Activated CD4-positive, alpha-beta memory T cell treated with anti-CD3 and anti-CD28 coated beads for 36 hours (primary cell): ENCODE measurements at regions of chr3 and their contacts with region 1.

Region 1: DNA sequence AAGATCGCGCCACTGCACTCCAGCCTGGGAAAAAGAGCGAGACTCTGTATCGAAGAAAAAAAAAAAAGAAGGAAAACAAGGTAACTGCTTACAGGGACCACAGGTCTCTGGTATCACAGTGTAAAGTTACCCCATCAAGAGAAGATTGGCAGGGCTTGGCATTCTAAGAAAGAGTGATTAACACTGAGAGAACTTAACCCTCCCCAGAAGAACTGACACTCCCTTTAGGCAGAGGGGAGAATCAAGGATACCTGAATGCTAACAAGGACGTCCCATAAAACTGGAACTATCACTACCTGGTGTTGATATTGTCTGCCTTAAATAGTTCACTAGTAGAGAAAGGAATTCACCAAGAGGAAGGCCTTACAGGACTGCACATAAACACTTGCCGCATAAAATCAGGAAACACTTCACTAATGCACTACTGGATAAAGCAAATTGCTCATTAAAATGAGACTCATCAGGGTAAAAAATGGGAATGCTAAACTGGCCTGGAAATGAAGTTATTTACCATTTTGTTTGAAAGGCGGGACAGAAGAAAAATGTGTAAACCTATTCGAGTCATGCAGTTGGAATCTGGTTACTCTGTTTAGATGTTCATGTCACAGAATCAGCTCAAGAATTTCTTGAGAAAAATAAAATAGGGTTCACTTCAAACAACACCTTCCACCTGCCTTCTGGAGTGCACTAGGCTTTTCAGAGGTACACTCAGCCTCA is 121.6 kb downstream of the FOXP1 start:
- DNase-seq: no peak
- H3K4me3 Mint-ChIP-seq: peak overlapping the region; percentile 47
- H3K27ac Mint-ChIP-seq: peak overlapping the region; percentile 94
- H3K4me1 Mint-ChIP-seq: peaks cover 67% of the 10 kb centered on the region
- H3K27me3 Mint-ChIP-seq: no peaks in the 10 kb centered on the region

Region 2: DNA sequence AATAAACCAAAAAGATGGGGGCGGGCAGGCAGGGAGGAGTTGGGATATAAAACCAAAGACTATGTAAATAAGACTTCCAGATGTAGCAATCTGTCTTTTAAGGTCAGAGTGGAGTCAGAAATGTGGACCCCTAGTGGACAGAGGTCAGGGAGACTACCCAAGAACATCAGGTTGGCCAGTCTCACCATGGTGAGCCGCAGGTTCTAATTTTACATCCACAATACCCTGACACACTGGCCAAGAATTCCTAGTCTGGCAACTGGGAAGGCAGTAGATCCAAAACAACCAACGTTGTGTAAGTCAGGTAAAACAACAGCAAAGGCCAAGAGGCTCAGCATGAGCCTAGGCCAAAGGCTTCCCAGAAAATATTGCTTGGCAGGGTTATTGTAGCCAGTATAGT is 81.8 kb before region 1 on chr3:
- CTCF ChIA-PET with region 1: no interaction called
- POLR2A ChIA-PET with region 1: no interaction called
- intact Hi-C with region 1: loop called (anchors 2 kb)
- DNase-seq: no peak
- H3K4me3 Mint-ChIP-seq: no peak overlapping the region
- H3K27ac Mint-ChIP-seq: peak overlapping the region; percentile 85
- H3K4me1 Mint-ChIP-seq: peaks cover 82% of the 10 kb centered on the region
- H3K27me3 Mint-ChIP-seq: no peaks in the 10 kb centered on the region

Region 3: GRCh38 chr3:71397046-71397445 is 64.9 kb before region 1 on chr3:
- CTCF ChIA-PET with region 1: interaction called, 7 read pairs
- POLR2A ChIA-PET with region 1: interaction called, 5 read pairs
- intact Hi-C with region 1: loop called (anchors 2 kb)
- DNase-seq: no peak
- H3K4me3 Mint-ChIP-seq: no peak overlapping the region
- H3K27ac Mint-ChIP-seq: no peak overlapping the region
- H3K4me1 Mint-ChIP-seq: peaks cover 72% of the 10 kb centered on the region
- H3K27me3 Mint-ChIP-seq: peaks cover 2% of the 10 kb centered on the region

Region 4: DNA sequence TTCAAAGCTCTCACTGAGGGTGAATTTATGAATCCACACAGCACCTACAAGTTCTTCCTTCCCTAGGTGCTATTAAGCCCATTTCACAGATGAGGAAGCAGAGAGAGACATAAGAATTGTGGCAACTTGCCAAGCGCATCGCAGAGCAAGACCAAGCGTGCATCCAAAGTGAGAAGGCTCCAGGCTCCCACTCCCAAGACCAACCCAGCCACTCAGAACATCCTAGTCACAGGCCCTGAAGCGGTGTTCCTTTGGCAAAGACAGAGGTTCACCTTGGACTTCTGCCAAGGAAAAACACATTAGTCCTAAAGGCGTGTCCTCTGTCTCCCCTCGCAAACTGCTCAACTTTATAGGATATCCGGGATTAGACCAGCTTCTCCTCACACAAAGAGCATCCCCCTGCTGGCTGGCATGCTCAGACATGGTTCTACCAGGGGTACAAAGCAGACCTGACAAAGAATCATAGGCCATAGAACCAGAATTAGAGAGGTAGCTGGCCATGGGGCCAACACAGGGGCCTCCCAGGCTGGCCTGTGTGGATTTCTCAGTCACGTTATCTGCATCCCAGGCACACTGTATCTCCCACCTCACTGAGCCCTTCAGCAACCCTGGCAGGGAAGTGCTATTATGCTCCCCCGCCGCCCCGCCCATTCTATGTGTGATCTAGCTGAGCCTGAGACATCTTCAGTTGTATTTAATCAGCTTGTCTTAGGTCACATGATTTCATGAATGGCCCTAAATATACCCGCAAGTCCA is 38.6 kb before region 1 on chr3:
- CTCF ChIA-PET with region 1: no interaction called
- POLR2A ChIA-PET with region 1: interaction called, 5 read pairs
- intact Hi-C with region 1: loop called (anchors 2 kb)
- DNase-seq: no peak
- H3K4me3 Mint-ChIP-seq: no peak overlapping the region
- H3K27ac Mint-ChIP-seq: peak overlapping the region; percentile 85
- H3K4me1 Mint-ChIP-seq: peaks cover 81% of the 10 kb centered on the region
- H3K27me3 Mint-ChIP-seq: no peaks in the 10 kb centered on the region

Region 5: GRCh38 chr3:71436337-71436736 is 25.6 kb before region 1 on chr3:
- CTCF ChIA-PET with region 1: no interaction called
- POLR2A ChIA-PET with region 1: no interaction called
- intact Hi-C with region 1: no loop called
- DNase-seq: no peak
- H3K4me3 Mint-ChIP-seq: no peak overlapping the region
- H3K27ac Mint-ChIP-seq: no peak overlapping the region
- H3K4me1 Mint-ChIP-seq: peaks cover 84% of the 10 kb centered on the region
- H3K27me3 Mint-ChIP-seq: no peaks in the 10 kb centered on the region

Region 6: DNA sequence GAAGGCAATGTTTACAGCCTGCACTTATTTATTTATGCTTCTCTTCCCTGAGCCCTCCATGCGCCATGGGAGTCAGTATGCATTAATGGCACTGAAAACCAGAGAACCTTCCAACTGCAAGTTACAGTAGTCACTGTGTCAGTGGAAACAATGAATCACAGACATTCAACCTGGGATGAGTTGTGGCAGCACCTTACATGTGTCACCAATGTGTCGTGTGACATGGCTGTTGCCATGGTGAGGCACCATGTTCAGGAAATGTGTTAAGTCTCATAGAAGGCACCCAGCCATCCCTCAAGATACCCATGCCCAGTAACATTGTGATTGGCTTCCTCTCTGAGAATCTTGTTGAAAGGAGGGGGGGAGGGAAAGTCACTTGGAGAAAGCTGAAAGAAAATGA is 16.7 kb after region 1 on chr3:
- CTCF ChIA-PET with region 1: interaction called, 3 read pairs
- POLR2A ChIA-PET with region 1: interaction called, 3 read pairs
- intact Hi-C with region 1: loop called (anchors 1 kb)
- DNase-seq: peak; percentile 89
- H3K4me3 Mint-ChIP-seq: peak overlapping the region; percentile 33
- H3K27ac Mint-ChIP-seq: peak overlapping the region; percentile 84
- H3K4me1 Mint-ChIP-seq: peaks cover 66% of the 10 kb centered on the region
- H3K27me3 Mint-ChIP-seq: no peaks in the 10 kb centered on the region

Region 7: DNA sequence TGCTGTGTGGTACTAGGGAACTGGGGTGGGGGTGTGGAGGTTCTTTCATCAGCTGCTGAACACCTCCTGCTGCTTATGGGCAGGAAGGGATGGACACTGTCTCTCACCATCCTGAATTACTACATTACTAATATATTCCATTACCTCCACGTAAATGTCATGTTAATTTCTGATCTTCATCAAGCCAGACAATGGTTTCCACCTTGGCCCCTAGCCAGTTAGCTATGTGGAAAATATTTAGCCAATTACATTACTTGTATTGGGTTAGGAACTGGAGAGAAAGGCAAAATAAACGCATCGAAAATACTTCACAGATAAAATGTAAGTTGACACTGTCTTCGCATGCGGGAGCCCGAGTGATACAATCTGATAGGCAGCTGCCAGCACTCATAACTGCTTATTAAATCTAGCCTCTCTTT is 26.5 kb after region 1 on chr3:
- CTCF ChIA-PET with region 1: interaction called, 3 read pairs
- POLR2A ChIA-PET with region 1: no interaction called
- intact Hi-C with region 1: loop called (anchors 1 kb)
- DNase-seq: no peak
- H3K4me3 Mint-ChIP-seq: peak overlapping the region; percentile 50
- H3K27ac Mint-ChIP-seq: peak overlapping the region; percentile 79
- H3K4me1 Mint-ChIP-seq: peaks cover 88% of the 10 kb centered on the region
- H3K27me3 Mint-ChIP-seq: no peaks in the 10 kb centered on the region